IMR-90 (cell line): ENCODE measurements at regions of chr6 and their contacts with region 1.

Region 1: GRCh38 chr6:163872335-163872734 is 457.8 kb downstream of the QKI start:
- DNase-seq: peak; percentile 98
- ATAC-seq: peak; percentile 80
- H3K4me3 ChIP-seq: no peak overlapping the region
- H3K27ac ChIP-seq: no peak overlapping the region
- H3K4me1 ChIP-seq: peaks cover 5% of the 10 kb centered on the region
- H3K27me3 ChIP-seq: no peaks in the 10 kb centered on the region
- CTCF ChIP-seq: no peak
- POLR2A ChIP-seq: no peak
- RAD21 ChIP-seq: no peak

Region 2: DNA sequence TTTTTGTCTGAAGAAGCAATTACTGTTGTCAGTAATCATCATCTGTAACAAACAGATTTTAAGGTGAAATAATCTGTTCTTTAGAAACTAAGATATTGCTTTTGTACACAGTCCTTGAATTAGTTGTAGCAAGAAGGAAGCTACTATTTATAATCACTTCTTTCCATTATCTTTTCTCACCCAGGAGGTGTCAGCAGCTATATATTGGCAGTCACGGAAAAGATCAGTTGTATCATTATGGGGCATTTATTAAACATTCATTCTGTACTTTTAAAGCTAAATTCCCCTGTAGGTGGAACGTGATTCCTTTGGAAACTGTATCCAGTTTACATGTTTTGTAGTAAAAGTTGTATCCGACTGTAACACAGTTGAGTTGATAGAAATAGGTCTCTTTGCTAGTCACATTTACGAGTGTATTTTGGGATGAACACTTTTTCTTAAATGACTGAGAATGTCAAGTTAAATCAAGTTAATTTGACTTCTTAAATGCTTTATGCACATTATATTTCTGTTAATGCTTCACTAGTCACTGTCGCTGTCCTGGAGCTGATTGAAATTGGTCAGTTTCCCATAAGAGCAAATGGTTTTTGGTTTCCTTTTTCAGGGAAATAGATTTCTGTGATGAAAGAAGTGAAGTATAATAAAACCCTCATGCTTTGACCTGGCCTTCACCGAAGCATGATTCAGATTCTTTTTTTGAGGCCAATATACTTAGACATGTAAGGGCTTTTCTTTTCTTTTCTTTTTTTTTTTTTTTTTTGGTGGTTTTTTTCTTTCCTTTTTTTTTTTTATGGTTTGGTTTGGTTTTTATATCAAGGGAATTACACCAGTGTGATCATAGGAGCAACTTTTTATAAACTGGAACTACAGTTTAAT is 452.7 kb before region 1 on chr6:
- CTCF ChIA-PET with region 1: no interaction called
- POLR2A ChIA-PET with region 1: no interaction called
- dilution Hi-C with region 1: no loop called
- in situ Hi-C with region 1: loop called (anchors 5 kb)
- intact Hi-C with region 1: loop called (anchors 5 kb)
- DNase-seq: peak; percentile 44
- ATAC-seq: no peak
- H3K4me3 ChIP-seq: 0 out of 2 replicates have a peak overlapping the region, but pooled peaks have one; percentile 12
- H3K27ac ChIP-seq: no peak overlapping the region
- H3K4me1 ChIP-seq: peaks cover 10% of the 10 kb centered on the region
- H3K27me3 ChIP-seq: no peaks in the 10 kb centered on the region
- CTCF ChIP-seq: no peak
- POLR2A ChIP-seq: no peak
- RAD21 ChIP-seq: no peak

Region 3: DNA sequence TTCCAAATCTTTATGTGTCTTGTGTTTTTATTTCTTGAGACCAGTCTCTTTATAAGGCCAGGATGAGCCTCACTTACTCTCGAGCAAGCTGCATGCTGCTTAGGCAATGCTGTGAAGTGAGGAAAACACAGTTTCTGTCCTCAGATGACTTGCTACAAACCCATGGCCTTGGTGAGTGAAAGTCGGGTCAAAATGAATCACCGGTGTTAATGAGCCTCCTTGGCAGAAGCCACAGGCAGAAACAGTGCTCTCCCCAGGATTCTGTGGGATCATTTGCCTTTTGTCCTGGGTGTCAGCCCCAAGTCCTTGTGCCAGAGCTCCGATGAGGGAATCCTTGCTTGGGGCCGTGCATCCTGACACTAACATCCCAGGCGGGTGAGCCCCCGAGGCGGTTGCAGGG is 24.7 kb after region 1 on chr6:
- CTCF ChIA-PET with region 1: no interaction called
- POLR2A ChIA-PET with region 1: no interaction called
- dilution Hi-C with region 1: no loop called
- in situ Hi-C with region 1: no loop called
- intact Hi-C with region 1: no loop called
- DNase-seq: peak; percentile 50
- ATAC-seq: no peak; the same call in 1 of the 2 replicates
- H3K4me3 ChIP-seq: no peak overlapping the region
- H3K27ac ChIP-seq: peak overlapping the region; percentile 18; the same call in 1 of the 2 replicates
- H3K4me1 ChIP-seq: no peaks in the 10 kb centered on the region
- H3K27me3 ChIP-seq: no peaks in the 10 kb centered on the region
- CTCF ChIP-seq: no peak
- POLR2A ChIP-seq: no peak
- RAD21 ChIP-seq: no peak

Region 4: DNA sequence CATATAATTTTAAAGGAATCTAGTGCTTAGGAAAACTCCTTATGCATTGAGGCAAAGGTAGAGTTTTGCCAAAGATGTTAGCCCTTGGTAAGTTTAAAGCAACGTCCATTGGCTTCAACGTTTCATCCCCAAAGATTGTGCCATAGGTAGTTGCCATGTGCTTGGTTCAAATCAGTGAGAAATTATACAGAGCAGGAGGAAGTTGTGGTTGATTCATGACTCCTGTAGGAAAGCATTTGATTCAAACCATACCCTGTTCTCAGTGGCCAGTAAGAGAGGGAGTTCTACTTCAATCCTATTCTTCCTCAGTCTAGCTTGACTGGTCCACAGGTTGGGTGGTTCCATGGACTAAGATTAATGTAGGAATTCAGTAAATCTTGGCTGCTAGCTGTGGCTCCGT is 77.8 kb after region 1 on chr6:
- CTCF ChIA-PET with region 1: no interaction called
- POLR2A ChIA-PET with region 1: no interaction called
- dilution Hi-C with region 1: no loop called
- in situ Hi-C with region 1: no loop called
- intact Hi-C with region 1: no loop called
- DNase-seq: peak; percentile 50
- ATAC-seq: no peak
- H3K4me3 ChIP-seq: no peak overlapping the region
- H3K27ac ChIP-seq: no peak overlapping the region
- H3K4me1 ChIP-seq: no peaks in the 10 kb centered on the region
- H3K27me3 ChIP-seq: no peaks in the 10 kb centered on the region
- CTCF ChIP-seq: no peak
- POLR2A ChIP-seq: no peak
- RAD21 ChIP-seq: no peak